ENCODE measurements at regions of chr17 and their contacts with region 1.

Region 1: GRCh38 chr17:40113110-40113906 is 8.5 kb upstream of the MSL1 start:
- DNase-seq: peak; percentile 92 to 97 (median 93)
- H3K4me3 ChIP-seq: peak overlapping the region; percentile 47 to 64
- H3K4me3 Mint-ChIP-seq: peak overlapping the region; percentile 83 to 93 (median 86)
- H3K27ac ChIP-seq: peak overlapping the region; percentile 51
- H3K27ac Mint-ChIP-seq: peak overlapping the region; percentile 87 to 100 (median 95)
- H3K4me1 ChIP-seq: peaks cover 59% of the 10 kb centered on the region
- H3K4me1 Mint-ChIP-seq: peaks cover 40 to 60% (median 52%) of the 10 kb centered on the region in 4 donors
- H3K27me3 ChIP-seq: no peaks in the 10 kb centered on the region
- H3K27me3 Mint-ChIP-seq: no peaks in the 10 kb centered on the region

Region 2: GRCh38 chr17:40019140-40019991 is 93.9 kb before region 1 on chr17:
- CTCF ChIA-PET with region 1: interaction called, 56 read pairs
- POLR2A ChIA-PET with region 1: no interaction called
- intact Hi-C with region 1: no loop called
- DNase-seq: no peak
- H3K4me3 ChIP-seq: no peak overlapping the region
- H3K4me3 Mint-ChIP-seq: no peak overlapping the region
- H3K27ac ChIP-seq: no peak overlapping the region
- H3K27ac Mint-ChIP-seq: peak overlapping the region in 2 of 7 donors; percentile 57 to 68
- H3K4me1 ChIP-seq: no peaks in the 10 kb centered on the region
- H3K4me1 Mint-ChIP-seq: no peaks in the 10 kb centered on the region
- H3K27me3 ChIP-seq: no peaks in the 10 kb centered on the region
- H3K27me3 Mint-ChIP-seq: no peaks in the 10 kb centered on the region

Region 3: GRCh38 chr17:40062329-40063186 is 50.8 kb before region 1 on chr17 and contains the start of gene THRA:
- CTCF ChIA-PET with region 1: interaction called, 543 read pairs
- POLR2A ChIA-PET with region 1: interaction called, 178 read pairs
- intact Hi-C with region 1: loop called (anchors 1 kb)
- DNase-seq: peak; percentile 71 to 75 (median 73)
- H3K4me3 ChIP-seq: peak within 1 kb of the TSS; percentile 57 to 70
- H3K4me3 Mint-ChIP-seq: peak within 1 kb of the TSS; percentile 90 to 96 (median 94)
- H3K27ac ChIP-seq: peak within 1 kb of the TSS; percentile 70
- H3K27ac Mint-ChIP-seq: peak within 1 kb of the TSS; percentile 81 to 96 (median 91)
- H3K4me1 ChIP-seq: peaks cover 49% of the 10 kb centered on the region
- H3K4me1 Mint-ChIP-seq: peaks cover 33 to 53% (median 42%) of the 10 kb centered on the region in 4 donors
- H3K27me3 ChIP-seq: peaks cover 3% of the 10 kb centered on the region
- H3K27me3 Mint-ChIP-seq: peaks cover 1% of the 10 kb centered on the region in 2 donors
- total RNA-seq, gene THRA: 35.9 to 41.3 TPM

Region 4: DNA sequence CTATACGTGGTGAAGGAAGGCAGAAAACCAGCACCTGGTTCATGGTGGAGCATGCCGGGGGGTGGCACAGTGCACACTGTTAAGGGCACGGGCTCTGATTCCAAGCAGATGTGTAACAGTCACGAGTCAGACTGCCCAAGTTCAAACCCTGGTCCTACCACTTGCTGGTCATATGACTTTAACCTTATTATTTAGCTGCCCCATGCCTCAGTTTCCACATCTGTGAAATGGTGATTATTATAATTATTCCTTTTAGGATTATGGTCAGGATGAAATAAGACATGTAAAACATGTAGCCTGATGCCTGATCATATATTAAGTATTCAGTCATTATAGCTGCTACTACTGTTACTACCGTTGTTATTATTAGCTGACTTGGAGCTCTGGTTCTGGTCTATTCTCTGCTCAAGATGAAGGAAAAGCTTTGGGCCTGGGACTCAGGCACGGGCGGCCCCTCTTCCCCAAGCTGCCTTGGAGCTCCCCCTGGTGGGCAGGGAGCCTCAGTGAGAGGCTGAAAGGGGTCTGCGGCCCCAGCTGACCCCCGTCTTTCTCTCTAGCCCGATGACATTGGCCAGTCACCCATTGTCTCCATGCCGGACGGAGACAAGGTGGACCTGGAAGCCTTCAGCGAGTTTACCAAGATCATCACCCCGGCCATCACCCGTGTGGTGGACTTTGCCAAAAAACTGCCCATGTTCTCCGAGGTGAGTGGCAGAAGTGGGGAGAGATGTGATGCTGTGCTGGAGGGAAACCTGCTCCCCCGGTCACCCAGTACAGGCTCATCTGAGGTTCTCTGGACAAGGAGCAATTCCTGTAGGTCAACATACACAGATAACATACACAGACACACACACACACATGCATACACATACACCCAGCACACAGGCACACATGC is 26.9 kb before region 1 on chr17:
- CTCF ChIA-PET with region 1: interaction called, 543 read pairs
- POLR2A ChIA-PET with region 1: interaction called, 494 read pairs
- intact Hi-C with region 1: no loop called
- DNase-seq: peak in 3 of 5 donors; percentile 40 to 52 (median 50)
- H3K4me3 ChIP-seq: no peak overlapping the region
- H3K4me3 Mint-ChIP-seq: no peak overlapping the region
- H3K27ac ChIP-seq: no peak overlapping the region
- H3K27ac Mint-ChIP-seq: peak overlapping the region in 4 of 7 donors; percentile 1 to 77 (median 60)
- H3K4me1 ChIP-seq: peaks cover 5% of the 10 kb centered on the region
- H3K4me1 Mint-ChIP-seq: peaks cover 6 to 23% (median 10%) of the 10 kb centered on the region in 4 donors
- H3K27me3 ChIP-seq: no peaks in the 10 kb centered on the region
- H3K27me3 Mint-ChIP-seq: no peaks in the 10 kb centered on the region

Region 5: GRCh38 chr17:40151414-40151963 is 38.2 kb after region 1 on chr17:
- CTCF ChIA-PET with region 1: interaction called, 23 read pairs
- POLR2A ChIA-PET with region 1: interaction called, 3 read pairs
- intact Hi-C with region 1: no loop called
- DNase-seq: no peak
- H3K4me3 ChIP-seq: no peak overlapping the region
- H3K4me3 Mint-ChIP-seq: no peak overlapping the region
- H3K27ac ChIP-seq: no peak overlapping the region
- H3K27ac Mint-ChIP-seq: peak overlapping the region in 2 of 7 donors; percentile 43 to 76
- H3K4me1 ChIP-seq: peaks cover 31% of the 10 kb centered on the region
- H3K4me1 Mint-ChIP-seq: peaks cover 35 to 59% (median 45%) of the 10 kb centered on the region in 4 donors
- H3K27me3 ChIP-seq: no peaks in the 10 kb centered on the region
- H3K27me3 Mint-ChIP-seq: no peaks in the 10 kb centered on the region

Region 6: GRCh38 chr17:40191237-40192208 is 78.2 kb after region 1 on chr17:
- CTCF ChIA-PET with region 1: interaction called, 100 read pairs
- POLR2A ChIA-PET with region 1: interaction called, 18 read pairs
- intact Hi-C with region 1: loop called (anchors 1 kb)
- DNase-seq: peak; percentile 52 to 67 (median 56)
- H3K4me3 ChIP-seq: peak overlapping the region; percentile 46 to 52
- H3K4me3 Mint-ChIP-seq: peak overlapping the region; percentile 90 to 96 (median 92)
- H3K27ac ChIP-seq: no peak overlapping the region
- H3K27ac Mint-ChIP-seq: peak overlapping the region in 5 of 7 donors; percentile 24 to 84 (median 82)
- H3K4me1 ChIP-seq: peaks cover 6% of the 10 kb centered on the region
- H3K4me1 Mint-ChIP-seq: peaks cover 0 to 11% (median 7%) of the 10 kb centered on the region in 4 donors
- H3K27me3 ChIP-seq: no peaks in the 10 kb centered on the region
- H3K27me3 Mint-ChIP-seq: no peaks in the 10 kb centered on the region

Region 7: GRCh38 chr17:40253565-40253964 is 140.3 kb after region 1 on chr17:
- CTCF ChIA-PET with region 1: no interaction called
- POLR2A ChIA-PET with region 1: no interaction called
- intact Hi-C with region 1: no loop called
- DNase-seq: no peak
- H3K4me3 ChIP-seq: no peak overlapping the region
- H3K4me3 Mint-ChIP-seq: no peak overlapping the region
- H3K27ac ChIP-seq: no peak overlapping the region
- H3K27ac Mint-ChIP-seq: peak overlapping the region in 1 of 7 donors; percentile 62
- H3K4me1 ChIP-seq: peaks cover 4% of the 10 kb centered on the region
- H3K4me1 Mint-ChIP-seq: peaks cover 17 to 35% (median 18%) of the 10 kb centered on the region in 4 donors
- H3K27me3 ChIP-seq: no peaks in the 10 kb centered on the region
- H3K27me3 Mint-ChIP-seq: no peaks in the 10 kb centered on the region

Region 8: DNA sequence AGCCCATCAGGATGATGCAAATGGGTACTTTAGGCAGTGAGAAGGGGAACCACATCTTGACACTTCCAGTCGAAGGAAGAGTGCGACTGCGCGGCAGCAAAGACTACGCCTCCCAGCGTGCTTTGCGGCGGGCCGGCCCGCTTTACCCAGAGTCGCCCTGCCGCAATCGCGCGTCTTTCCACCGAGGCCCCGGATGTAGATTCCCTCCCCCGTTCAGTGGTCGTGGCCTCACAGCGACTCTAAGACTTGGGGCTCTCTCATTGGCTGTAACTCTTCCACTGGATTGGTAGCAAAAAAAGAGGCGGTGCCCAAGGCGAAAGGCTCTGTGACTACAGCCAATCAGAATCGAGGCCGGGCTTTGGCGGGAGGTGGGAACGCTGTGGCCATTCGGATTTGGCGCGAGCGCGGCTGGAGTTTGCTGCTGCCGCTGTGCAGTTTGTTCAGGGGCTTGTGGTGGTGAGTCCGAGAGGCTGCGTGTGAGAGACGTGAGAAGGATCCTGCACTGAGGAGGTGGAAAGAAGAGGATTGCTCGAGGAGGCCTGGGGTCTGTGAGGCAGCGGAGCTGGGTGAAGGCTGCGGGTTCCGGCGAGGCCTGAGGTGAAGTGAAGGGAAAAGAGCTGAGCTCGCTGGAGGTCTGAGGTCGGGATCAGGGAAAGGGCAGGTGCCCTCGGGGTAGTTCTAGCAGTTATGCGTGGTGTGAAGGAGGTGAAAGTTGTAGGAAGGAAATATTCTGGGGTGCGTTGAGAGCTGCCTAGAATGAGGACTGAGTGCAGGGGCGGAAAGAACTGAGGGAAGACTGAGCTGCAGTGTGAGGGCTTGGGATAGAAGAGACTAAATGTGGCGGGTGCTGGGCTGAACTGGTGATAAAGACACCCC is 174.4 kb after region 1 on chr17 and contains the start of gene CDC6:
- CTCF ChIA-PET with region 1: interaction called, 10 read pairs
- POLR2A ChIA-PET with region 1: no interaction called
- intact Hi-C with region 1: loop called (anchors 1 kb)
- DNase-seq: peak; percentile 97 to 100 (median 98)
- H3K4me3 ChIP-seq: peak within 1 kb of the TSS; percentile 80 to 89
- H3K4me3 Mint-ChIP-seq: peak within 1 kb of the TSS; percentile 97 to 100 (median 99)
- H3K27ac ChIP-seq: peak within 1 kb of the TSS; percentile 42
- H3K27ac Mint-ChIP-seq: peak within 1 kb of the TSS; percentile 82 to 98 (median 94)
- H3K4me1 ChIP-seq: peaks cover 26% of the 10 kb centered on the region
- H3K4me1 Mint-ChIP-seq: peaks cover 17 to 40% (median 27%) of the 10 kb centered on the region in 4 donors
- H3K27me3 ChIP-seq: no peaks in the 10 kb centered on the region
- H3K27me3 Mint-ChIP-seq: no peaks in the 10 kb centered on the region
- total RNA-seq, gene CDC6: 0.72 to 2.1 TPM